Left ventricle myocardium superior (tissue), 1 donor: ENCODE measurements at regions of chr2 and their contacts with region 1.

Region 1: GRCh38 chr2:68196120-68196716 is 38.5 kb downstream of the PNO1 start:
- DNase-seq: no peak
- ATAC-seq: no peak

Region 2: GRCh38 chr2:68244456-68244855 is 48.2 kb after region 1 on chr2:
- intact Hi-C with region 1: loop called (anchors 10 kb)
- DNase-seq: no peak
- ATAC-seq: no peak

Region 3: GRCh38 chr2:68441179-68441993 is 245.2 kb after region 1 on chr2:
- intact Hi-C with region 1: loop called (anchors 10 kb)
- DNase-seq: peak; percentile 63
- ATAC-seq: peak; percentile 90